PC-9 (cell line): ENCODE measurements at regions of chr12 and their contacts with region 1.

Region 1: DNA sequence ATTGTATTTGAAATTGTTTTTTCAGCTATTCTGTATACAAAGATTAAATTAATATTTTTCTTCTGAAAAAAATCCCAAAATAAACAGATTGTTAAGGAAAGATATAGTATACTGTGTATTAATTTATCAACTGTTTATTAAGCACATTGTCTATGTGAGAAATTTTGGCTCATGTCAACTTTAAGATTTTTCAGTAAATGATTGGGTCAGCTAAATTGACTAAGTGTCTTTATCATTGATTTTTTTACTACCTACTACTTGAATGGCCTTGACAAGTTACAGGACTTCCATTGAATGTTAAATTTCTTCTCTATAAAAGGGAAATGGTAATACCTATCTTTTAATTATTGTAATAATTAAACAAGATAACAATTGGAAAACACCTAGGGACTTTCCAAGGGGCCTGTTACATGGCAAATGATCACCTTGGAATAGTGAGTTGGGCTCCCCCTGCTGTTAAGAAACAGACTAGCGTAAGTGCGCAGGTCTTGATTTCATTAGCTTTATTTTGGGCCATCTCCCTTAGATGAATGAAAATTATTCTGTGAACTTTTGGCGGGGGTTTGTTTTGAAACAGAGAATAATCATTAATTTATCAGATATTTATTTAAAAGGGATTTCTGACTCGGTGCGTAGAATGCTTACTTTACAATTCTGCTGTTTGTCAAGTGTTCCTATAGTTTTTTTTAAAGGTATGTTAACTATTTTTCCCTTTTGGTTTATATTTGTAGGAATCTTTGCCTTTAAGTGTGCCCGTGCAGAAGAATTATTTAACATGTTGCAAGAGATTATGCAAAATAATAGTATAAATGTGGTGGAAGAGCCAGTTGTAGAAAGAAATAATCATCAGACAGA is 14.5 kb upstream of the CCT2 start:
- DNase-seq: peak; percentile 47 to 55
- H3K4me3 ChIP-seq: no peak overlapping the region
- H3K27ac ChIP-seq: no peak overlapping the region
- H3K4me1 ChIP-seq: no peaks in the 10 kb centered on the region
- H3K27me3 ChIP-seq: no peaks in the 10 kb centered on the region
- CTCF ChIP-seq: peak; percentile 89

Region 2: GRCh38 chr12:68746572-68747180 is 824.1 kb before region 1 on chr12:
- CTCF ChIA-PET with region 1: no interaction called
- POLR2A ChIA-PET with region 1: no interaction called
- intact Hi-C with region 1: no loop called
- DNase-seq: peak; percentile 45 to 47
- H3K4me3 ChIP-seq: peak overlapping the region; percentile 77
- H3K27ac ChIP-seq: peak overlapping the region; percentile 16; the same call in 1 of the 2 replicates
- H3K4me1 ChIP-seq: peaks cover 17% of the 10 kb centered on the region
- H3K27me3 ChIP-seq: no peaks in the 10 kb centered on the region
- CTCF ChIP-seq: no peak

Region 3: DNA sequence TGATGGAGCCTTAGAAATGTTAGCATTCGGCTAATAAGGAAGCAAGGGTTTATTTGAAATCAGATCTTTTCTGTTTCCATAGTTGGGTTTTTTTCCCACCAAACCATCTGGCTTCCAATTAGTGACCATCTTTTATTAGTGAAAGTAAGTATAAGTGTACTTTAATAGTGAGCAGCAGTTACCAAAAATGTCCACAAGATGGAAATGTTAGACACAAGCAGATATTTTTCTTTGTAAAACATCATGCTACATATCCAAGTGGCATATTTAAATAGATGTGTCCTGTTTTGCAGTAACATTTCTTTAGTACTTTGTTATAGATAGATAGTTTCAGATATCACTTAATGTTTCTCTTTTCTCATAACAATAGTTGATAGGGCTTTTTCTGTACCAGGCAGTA is 182.4 kb before region 1 on chr12:
- CTCF ChIA-PET with region 1: no interaction called
- POLR2A ChIA-PET with region 1: no interaction called
- intact Hi-C with region 1: loop called (anchors 2 kb)
- DNase-seq: peak in 1 of 2 experiments; percentile 43
- H3K4me3 ChIP-seq: no peak overlapping the region
- H3K27ac ChIP-seq: no peak overlapping the region
- H3K4me1 ChIP-seq: no peaks in the 10 kb centered on the region
- H3K27me3 ChIP-seq: no peaks in the 10 kb centered on the region
- CTCF ChIP-seq: peak; percentile 75

Region 4: DNA sequence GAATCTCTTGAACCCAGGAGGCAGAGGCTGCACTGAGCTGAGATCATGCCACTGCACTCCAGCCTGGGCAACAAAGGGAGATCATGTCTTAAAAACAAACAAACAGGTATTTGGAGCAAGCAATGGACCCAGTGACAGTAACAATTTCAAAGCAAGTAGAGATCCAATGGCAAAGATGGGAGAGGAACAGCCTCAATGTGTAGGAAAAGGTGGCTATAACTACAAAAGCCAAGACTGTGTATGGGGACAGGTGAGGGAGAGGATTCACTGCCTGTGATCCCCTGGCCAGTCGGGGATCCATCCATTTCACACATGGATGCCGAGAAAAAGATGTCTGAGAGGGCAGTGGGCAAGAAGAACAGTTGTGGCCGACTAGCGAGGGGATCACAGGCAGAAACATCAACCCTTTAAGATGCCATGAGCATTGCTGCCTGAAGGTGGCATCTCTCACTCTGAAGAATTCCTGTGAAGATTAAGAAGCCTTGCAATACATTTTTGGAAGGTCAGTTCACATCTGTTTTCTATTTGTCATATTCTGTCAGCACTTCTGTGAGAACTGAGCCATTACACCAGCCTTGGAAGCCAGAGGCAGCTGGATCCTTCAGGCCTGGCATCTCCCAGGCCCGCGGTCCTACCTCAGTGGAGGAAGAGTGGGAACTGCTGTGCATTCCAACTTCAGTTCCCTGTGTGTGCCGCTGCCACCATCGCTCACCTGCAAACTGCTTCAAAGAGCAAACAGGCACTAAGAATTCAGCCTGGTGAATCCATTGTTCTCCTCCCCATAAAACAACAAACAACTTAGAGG is 155.1 kb before region 1 on chr12:
- CTCF ChIA-PET with region 1: no interaction called
- POLR2A ChIA-PET with region 1: no interaction called
- intact Hi-C with region 1: loop called (anchors 1 kb)
- DNase-seq: peak in 1 of 2 experiments; percentile 15
- H3K4me3 ChIP-seq: no peak overlapping the region
- H3K27ac ChIP-seq: no peak overlapping the region
- H3K4me1 ChIP-seq: no peaks in the 10 kb centered on the region
- H3K27me3 ChIP-seq: no peaks in the 10 kb centered on the region
- CTCF ChIP-seq: peak; percentile 67

Region 5: DNA sequence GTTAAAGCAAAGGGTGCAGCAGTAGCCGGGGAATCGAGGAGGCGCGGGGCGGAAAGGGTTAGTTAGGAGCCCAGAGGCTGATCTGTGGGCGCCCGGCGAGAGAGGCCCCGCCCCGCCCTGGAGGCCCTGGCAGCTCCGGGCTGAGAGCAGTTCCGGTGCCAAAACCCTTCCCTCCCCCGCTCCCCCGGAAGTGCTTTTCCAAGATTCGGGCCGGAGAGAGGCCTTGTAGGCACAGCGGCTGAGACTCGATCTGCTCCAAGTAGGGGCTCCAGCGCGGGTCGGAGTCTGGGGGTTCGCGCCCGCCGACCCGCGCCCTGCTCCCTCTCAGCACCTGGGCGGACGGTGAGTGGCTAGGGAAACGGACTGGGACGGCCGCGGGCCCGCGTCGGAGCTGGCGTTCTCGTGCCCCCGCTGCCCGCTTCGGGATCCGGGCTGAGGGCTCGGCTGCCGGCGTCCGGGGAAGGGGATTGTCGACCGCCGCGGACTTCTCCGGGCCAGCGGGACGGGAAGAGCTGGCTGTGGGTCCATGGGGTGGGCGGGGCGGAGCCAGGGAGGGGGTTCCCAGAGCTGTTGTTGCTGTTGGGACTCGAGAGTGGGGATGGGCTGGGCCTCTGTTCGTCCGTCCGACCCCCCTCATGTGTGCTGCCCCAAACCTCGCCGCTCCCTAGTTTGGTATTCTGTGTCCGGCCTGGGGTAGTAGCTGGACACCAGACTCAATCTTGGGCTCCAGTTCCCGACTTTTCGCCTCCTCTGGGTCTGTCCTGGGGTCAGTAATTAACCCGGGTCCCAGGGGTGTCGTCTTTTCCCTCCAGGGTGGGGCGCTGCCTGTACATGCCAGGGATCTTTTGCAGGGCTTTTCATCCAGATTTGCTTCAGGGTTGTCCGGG is 100.3 kb before region 1 on chr12 and contains the start of gene FRS2:
- CTCF ChIA-PET with region 1: interaction called, 3 read pairs
- POLR2A ChIA-PET with region 1: interaction called, 3 read pairs
- intact Hi-C with region 1: loop called (anchors 2 kb)
- DNase-seq: peak; percentile 81 to 86
- H3K4me3 ChIP-seq: peak within 1 kb of the TSS; percentile 72
- H3K27ac ChIP-seq: peak within 1 kb of the TSS; percentile 54
- H3K4me1 ChIP-seq: peaks cover 26% of the 10 kb centered on the region
- H3K27me3 ChIP-seq: no peaks in the 10 kb centered on the region
- CTCF ChIP-seq: peak; percentile 47; the same call in 1 of the 2 replicates
- total RNA-seq, gene FRS2: 15.6 and 23.3 TPM in 2 replicates

Region 6: DNA sequence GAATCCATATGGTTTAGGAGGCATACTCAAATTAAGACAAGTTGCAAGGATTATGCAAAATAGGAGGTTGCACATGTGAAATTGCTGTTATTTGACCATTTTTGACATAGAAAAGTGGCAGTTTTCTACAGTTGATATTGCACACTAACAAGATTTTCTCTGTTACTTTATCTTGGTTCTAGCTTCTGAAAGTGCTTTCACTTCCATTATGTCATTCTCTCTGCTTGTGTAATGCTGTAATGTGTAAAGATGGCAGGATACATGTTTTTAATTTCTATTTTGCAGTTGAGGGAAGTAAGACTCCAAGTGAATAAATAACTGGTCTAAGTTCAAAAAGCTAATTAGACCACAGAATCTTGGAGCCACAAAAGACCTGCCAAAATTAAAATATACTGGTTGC is 314.9 kb after region 1 on chr12:
- CTCF ChIA-PET with region 1: no interaction called
- POLR2A ChIA-PET with region 1: no interaction called
- intact Hi-C with region 1: no loop called
- DNase-seq: no peak
- H3K4me3 ChIP-seq: no peak overlapping the region
- H3K27ac ChIP-seq: no peak overlapping the region
- H3K4me1 ChIP-seq: no peaks in the 10 kb centered on the region
- H3K27me3 ChIP-seq: no peaks in the 10 kb centered on the region
- CTCF ChIP-seq: no peak